Activated naive CD4-positive, alpha-beta T cell treated with anti-CD3 and anti-CD28 coated beads, Interleukin-2, amount 10 ng/mL, durations not matched to agents 7 days and 5 days (primary cell): ENCODE measurements at regions of chr1 and their contacts with region 1.

Region 1: GRCh38 chr1:54488779-54489626 is 59.0 kb upstream of the ACOT11 start:
- DNase-seq: peak; percentile 69
- H3K4me3 Mint-ChIP-seq: peak overlapping the region; percentile 83
- H3K27ac Mint-ChIP-seq: peak overlapping the region; percentile 76
- H3K4me1 Mint-ChIP-seq: peaks cover 46% of the 10 kb centered on the region
- H3K27me3 Mint-ChIP-seq: peaks cover 66% of the 10 kb centered on the region

Region 2: GRCh38 chr1:54070171-54070837 is 418.7 kb before region 1 on chr1:
- CTCF ChIA-PET with region 1: interaction called, 22 read pairs
- DNase-seq: no peak
- H3K4me3 Mint-ChIP-seq: no peak overlapping the region
- H3K27ac Mint-ChIP-seq: no peak overlapping the region
- H3K4me1 Mint-ChIP-seq: no peaks in the 10 kb centered on the region
- H3K27me3 Mint-ChIP-seq: no peaks in the 10 kb centered on the region

Region 3: DNA sequence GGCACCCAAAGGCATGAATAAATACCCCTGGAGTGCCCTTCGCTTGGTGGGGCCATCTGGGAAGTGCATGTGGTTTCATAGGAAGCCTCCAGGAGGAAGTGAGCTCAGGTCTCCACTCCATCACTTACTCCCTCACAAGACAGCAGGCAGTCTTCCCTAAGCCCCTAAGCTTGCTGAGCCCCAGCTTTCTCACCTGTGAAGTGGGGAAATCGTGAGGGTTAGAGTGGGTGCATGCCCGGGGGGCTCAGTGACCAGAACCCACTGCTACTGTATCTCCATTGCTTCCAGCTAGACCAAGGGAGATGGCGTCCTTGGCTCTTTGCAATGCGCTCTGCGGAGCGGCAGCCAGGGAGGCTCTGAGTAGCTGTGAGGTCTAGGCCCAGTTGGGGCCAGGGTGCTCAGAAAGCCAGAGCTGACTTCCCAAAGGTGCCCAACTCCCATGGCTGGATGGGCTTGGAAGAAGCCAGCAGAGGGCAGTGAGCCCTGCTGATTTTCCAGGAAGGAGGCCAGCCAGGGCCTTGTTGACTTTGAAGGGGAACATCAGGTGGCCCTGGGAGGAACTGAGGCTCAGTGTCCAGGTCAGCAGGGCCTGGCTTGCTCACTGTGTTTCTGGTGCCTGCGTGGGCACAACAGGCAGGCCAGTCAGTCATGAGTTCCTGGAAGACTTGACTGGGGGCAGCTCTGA is 363.5 kb before region 1 on chr1:
- CTCF ChIA-PET with region 1: interaction called, 10 read pairs
- DNase-seq: no peak
- H3K4me3 Mint-ChIP-seq: no peak overlapping the region
- H3K27ac Mint-ChIP-seq: no peak overlapping the region
- H3K4me1 Mint-ChIP-seq: no peaks in the 10 kb centered on the region
- H3K27me3 Mint-ChIP-seq: peaks cover 36% of the 10 kb centered on the region

Region 4: DNA sequence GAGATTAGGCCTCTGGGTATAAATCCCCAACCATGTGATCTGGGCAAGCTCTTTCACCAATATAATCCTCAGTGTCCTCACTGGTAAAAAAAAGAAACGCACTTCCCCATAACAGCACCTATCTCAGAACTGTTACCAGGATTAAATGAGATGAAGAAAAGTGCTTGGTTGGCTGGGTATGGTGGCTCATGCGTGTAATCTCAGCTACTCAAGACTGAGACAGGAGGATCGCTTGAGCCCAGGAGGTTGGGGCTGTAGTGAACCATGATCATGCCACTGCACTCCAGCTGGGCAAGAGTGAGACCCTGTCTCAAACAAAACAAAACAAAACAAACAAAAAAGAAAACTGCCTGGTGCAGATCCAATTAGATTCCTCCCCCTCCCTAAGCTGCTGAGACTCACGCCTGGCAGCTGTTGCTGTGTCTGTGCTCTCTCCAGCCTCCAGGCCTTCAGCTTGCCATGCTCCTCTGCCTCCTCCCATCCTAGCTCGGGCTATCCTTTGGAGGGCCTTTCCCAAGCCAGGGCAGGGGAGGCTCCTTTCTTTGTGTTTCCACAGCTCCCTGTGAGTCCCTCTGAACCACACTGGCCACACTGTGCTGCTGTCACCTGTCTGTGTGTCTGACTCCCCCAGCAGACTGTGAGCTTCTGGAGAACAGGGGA is 308.2 kb before region 1 on chr1:
- CTCF ChIA-PET with region 1: interaction called, 23 read pairs
- DNase-seq: no peak
- H3K4me3 Mint-ChIP-seq: no peak overlapping the region
- H3K27ac Mint-ChIP-seq: no peak overlapping the region
- H3K4me1 Mint-ChIP-seq: no peaks in the 10 kb centered on the region
- H3K27me3 Mint-ChIP-seq: no peaks in the 10 kb centered on the region

Region 5: GRCh38 chr1:54371942-54372275 is 117.1 kb before region 1 on chr1:
- CTCF ChIA-PET with region 1: no interaction called
- DNase-seq: no peak
- H3K4me3 Mint-ChIP-seq: no peak overlapping the region
- H3K27ac Mint-ChIP-seq: peak overlapping the region; percentile 39
- H3K4me1 Mint-ChIP-seq: peaks cover 53% of the 10 kb centered on the region
- H3K27me3 Mint-ChIP-seq: no peaks in the 10 kb centered on the region

Region 6: DNA sequence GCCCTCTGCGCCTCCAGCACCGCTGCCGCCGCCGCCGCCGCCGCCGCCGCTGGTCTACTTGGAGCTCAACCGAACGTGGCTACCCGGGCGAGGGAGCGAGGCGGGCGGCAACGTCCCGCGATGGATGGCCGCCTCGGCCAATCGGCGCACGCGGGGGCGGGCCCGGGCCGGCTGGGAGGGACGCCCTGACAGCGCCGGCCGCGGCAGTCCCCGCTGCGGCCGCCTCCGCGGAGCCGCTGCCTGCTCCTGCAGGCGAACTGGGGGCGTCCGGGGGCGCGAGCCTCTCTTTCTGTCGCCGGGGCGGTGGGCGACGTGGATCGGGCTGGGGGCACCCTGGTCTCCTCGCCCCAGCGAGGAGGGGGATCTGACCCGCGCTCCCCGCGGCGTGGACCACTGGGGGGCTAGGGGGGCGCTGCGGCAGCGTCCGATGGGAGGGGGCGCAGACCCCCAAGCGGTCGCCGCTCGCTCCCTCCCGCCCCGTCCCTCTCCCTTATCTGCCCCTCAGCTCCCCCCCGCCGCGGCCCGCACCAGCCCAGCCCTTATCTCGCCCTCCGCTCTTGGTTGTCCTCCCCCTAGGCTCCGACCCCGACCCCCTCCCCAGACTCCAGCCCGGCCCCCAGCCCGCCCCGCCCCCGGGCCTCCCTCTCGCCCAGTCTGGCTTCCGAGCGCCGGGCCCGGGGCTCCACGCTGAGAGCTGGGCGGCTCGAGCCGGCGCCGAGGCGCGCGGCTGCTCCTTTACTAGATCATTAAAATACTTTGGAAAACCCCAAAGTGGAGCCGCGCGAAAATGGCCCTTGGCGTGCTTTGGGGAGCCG is 82.5 kb before region 1 on chr1 and contains the start of gene SSBP3:
- CTCF ChIA-PET with region 1: interaction called, 14 read pairs
- DNase-seq: peak; percentile 94
- H3K4me3 Mint-ChIP-seq: peak within 1 kb of the TSS; percentile 93
- H3K27ac Mint-ChIP-seq: peak within 1 kb of the TSS; percentile 92
- H3K4me1 Mint-ChIP-seq: peaks cover 76% of the 10 kb centered on the region
- H3K27me3 Mint-ChIP-seq: peaks cover 4% of the 10 kb centered on the region

Region 7: DNA sequence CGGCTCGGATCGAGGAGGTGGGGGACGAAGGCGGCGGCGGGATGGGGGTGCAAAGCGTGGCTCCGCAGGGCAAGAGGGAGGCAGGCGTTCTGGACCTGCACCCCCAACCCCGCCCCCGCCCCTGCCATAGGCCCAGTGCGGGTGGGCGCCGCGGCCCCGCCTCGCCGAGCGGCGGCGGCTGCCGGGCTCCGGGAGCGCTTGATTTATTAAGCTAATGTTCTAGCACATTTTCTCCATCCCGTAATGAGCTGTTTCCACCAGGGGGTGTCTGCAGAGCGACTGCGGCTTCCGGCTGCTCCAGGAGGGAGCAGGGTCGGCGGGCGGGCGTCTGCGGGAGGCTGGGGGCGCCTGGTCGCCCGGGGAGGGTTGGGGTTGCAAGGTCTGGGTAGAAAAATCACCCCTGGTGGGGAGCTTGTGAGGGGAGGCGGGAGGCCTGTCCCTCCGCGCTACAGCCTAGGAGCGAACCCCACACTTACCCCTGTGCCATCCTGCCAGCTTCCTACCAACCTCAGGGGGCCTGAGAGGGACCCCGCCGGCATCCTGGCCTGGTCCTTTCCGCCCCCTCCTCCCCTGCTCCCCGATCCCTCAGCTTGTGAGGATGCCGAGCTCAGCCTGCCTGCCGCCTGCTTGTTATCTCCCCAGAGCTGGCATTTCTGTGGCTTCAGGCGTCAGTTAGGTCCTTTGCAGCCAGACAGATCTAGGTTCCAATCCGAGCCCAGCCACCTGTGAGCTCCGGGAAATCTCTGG is 10.5 kb after region 1 on chr1:
- CTCF ChIA-PET with region 1: interaction called, 11 read pairs
- DNase-seq: peak; percentile 70
- H3K4me3 Mint-ChIP-seq: peak overlapping the region; percentile 64
- H3K27ac Mint-ChIP-seq: no peak overlapping the region
- H3K4me1 Mint-ChIP-seq: peaks cover 11% of the 10 kb centered on the region
- H3K27me3 Mint-ChIP-seq: peaks cover 77% of the 10 kb centered on the region

Region 8: GRCh38 chr1:55179177-55179835 is 690.3 kb after region 1 on chr1:
- CTCF ChIA-PET with region 1: no interaction called
- DNase-seq: no peak
- H3K4me3 Mint-ChIP-seq: no peak overlapping the region
- H3K27ac Mint-ChIP-seq: no peak overlapping the region
- H3K4me1 Mint-ChIP-seq: peaks cover 7% of the 10 kb centered on the region
- H3K27me3 Mint-ChIP-seq: no peaks in the 10 kb centered on the region